Naive thymus-derived CD4-positive, alpha-beta T cell (primary cell): ENCODE measurements at regions of chr16 and their contacts with region 1.

Region 1: DNA sequence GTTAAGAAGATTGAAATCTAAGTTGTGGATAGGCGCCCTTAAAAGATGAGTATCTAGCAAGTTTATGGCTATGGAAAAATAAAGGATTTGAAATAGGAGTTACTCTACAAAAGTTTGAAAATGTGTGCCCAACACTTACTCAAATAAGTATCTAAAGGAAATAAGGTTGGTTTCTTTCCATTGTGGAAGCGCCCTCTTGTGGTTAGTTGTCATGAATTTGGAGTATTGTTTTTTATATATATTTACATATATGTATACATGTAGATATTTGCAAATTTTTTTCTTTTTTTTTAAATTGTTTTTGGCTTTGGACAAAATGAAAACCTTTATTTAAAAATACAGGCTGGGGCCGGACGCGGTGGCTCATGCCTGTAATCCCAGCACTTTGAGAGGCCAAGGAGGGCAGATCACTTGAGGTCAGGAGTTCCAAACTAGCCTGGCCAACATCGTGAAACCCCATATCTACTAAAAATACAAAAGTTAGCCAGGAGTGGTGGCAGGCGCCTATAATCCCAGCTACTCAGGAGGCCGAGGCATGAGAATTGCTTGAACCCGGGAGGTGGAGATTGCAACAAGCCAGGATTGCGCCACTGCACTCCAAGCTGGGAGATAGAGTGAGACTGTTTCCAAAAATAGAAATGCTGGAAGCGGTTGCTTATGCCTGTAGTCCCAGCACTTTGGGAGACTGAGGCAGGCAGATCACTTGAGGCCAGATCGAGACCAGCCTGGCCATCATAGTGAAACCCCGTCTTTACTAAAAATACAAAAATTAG is 24.0 kb upstream of the VPS4A start:
- DNase-seq: peak in 7 of 9 donors; percentile 38 to 73 (median 65)
- ATAC-seq: peak; percentile 63
- H3K4me3 ChIP-seq: no peak overlapping the region
- H3K4me3 Mint-ChIP-seq: no peak overlapping the region
- H3K27ac ChIP-seq: no peak overlapping the region
- H3K27ac Mint-ChIP-seq: no peak overlapping the region
- H3K4me1 ChIP-seq: no peaks in the 10 kb centered on the region
- H3K4me1 Mint-ChIP-seq: peaks cover 0 to 2% (median 0%) of the 10 kb centered on the region in 7 donors
- H3K27me3 ChIP-seq: no peaks in the 10 kb centered on the region
- H3K27me3 Mint-ChIP-seq: no peaks in the 10 kb centered on the region

Region 2: DNA sequence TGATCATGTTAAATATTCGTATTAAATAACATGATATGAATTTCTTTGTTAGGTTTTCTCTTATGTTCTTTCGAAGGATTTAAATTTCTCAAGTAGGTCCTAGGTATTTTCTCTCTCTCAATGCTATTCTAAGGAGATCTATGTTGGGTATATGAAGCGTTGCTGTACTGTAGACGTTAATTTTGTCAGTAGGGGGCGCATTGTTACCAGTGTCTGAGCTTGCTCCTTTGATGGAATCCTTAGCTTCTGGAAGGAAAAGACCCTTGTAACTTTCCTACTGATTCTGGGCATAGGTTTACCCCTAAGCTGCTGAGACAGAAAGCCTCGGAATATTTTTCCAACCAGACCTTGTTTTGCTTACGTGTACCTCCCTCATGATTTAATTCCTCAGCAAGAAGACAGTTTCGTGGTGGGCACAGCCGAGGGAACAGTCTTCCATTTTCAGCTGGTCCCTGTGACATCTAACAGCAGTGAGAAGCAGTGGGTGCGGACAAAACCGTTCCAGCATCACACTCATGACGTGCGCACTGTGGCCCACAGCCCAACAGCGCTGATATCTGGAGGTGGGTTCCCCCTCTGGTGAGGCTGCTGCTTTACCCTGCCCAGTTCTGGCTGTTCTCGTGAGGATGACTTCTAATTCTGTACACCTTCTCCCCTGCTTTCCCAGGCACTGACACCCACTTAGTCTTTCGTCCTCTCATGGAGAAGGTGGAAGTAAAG is 136.8 kb before region 1 on chr16:
- CTCF ChIA-PET with region 1: interaction called, 131 read pairs
- POLR2A ChIA-PET with region 1: interaction called, 3 read pairs
- intact Hi-C with region 1: loop called in 1 of 2 experiments (anchors 1 kb)
- DNase-seq: peak in 7 of 9 donors; percentile 41 to 70 (median 63)
- ATAC-seq: peak; percentile 84
- H3K4me3 ChIP-seq: no peak overlapping the region
- H3K4me3 Mint-ChIP-seq: no peak overlapping the region
- H3K27ac ChIP-seq: no peak overlapping the region
- H3K27ac Mint-ChIP-seq: peak overlapping the region in 1 of 9 donors; percentile 2
- H3K4me1 ChIP-seq: no peaks in the 10 kb centered on the region
- H3K4me1 Mint-ChIP-seq: peaks cover 0 to 5% (median 3%) of the 10 kb centered on the region in 7 donors
- H3K27me3 ChIP-seq: no peaks in the 10 kb centered on the region
- H3K27me3 Mint-ChIP-seq: no peaks in the 10 kb centered on the region

Region 3: DNA sequence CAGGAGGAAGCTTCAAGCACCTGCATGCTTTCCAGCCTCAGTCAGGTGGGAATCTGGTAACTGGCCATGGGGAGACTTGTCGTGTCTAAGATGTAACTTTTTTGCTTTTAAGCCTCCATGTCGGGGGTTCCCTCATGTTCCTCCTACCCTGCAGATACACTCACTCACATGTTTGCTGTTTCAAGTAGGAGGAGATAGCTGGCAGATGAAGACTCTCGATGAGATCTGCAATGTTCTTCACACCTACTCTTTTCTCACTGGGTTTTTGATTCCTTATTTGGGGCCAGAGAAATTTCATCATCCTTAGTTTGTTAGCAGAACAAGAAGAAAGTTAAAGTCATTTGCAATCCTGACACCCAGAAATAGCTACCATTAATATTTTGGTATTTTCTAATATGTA is 129.9 kb before region 1 on chr16:
- CTCF ChIA-PET with region 1: interaction called, 131 read pairs
- POLR2A ChIA-PET with region 1: no interaction called
- intact Hi-C with region 1: no loop called
- DNase-seq: no peak
- ATAC-seq: no peak
- H3K4me3 ChIP-seq: no peak overlapping the region
- H3K4me3 Mint-ChIP-seq: no peak overlapping the region
- H3K27ac ChIP-seq: no peak overlapping the region
- H3K27ac Mint-ChIP-seq: no peak overlapping the region
- H3K4me1 ChIP-seq: no peaks in the 10 kb centered on the region
- H3K4me1 Mint-ChIP-seq: peaks cover 0 to 10% (median 0%) of the 10 kb centered on the region in 7 donors
- H3K27me3 ChIP-seq: no peaks in the 10 kb centered on the region
- H3K27me3 Mint-ChIP-seq: no peaks in the 10 kb centered on the region

Region 4: GRCh38 chr16:69166221-69166833 is 120.8 kb before region 1 on chr16:
- CTCF ChIA-PET with region 1: interaction called, 4 read pairs
- POLR2A ChIA-PET with region 1: no interaction called
- intact Hi-C with region 1: loop called in 1 of 2 experiments (anchors 5 kb)
- DNase-seq: peak in 7 of 9 donors; percentile 5 to 77 (median 25)
- ATAC-seq: peak; percentile 72
- H3K4me3 ChIP-seq: no peak overlapping the region
- H3K4me3 Mint-ChIP-seq: peak overlapping the region in 8 of 10 donors; percentile 1 to 63 (median 20)
- H3K27ac ChIP-seq: peak overlapping the region; percentile 11
- H3K27ac Mint-ChIP-seq: peak overlapping the region in 8 of 9 donors; percentile 19 to 87 (median 54)
- H3K4me1 ChIP-seq: peaks cover 8 to 14% of the 10 kb centered on the region in 2 donors
- H3K4me1 Mint-ChIP-seq: peaks cover 15 to 31% (median 22%) of the 10 kb centered on the region in 7 donors
- H3K27me3 ChIP-seq: no peaks in the 10 kb centered on the region
- H3K27me3 Mint-ChIP-seq: no peaks in the 10 kb centered on the region